HEK293 (cell line): ENCODE measurements at regions of chr2 and their contacts with region 1.

Region 1: DNA sequence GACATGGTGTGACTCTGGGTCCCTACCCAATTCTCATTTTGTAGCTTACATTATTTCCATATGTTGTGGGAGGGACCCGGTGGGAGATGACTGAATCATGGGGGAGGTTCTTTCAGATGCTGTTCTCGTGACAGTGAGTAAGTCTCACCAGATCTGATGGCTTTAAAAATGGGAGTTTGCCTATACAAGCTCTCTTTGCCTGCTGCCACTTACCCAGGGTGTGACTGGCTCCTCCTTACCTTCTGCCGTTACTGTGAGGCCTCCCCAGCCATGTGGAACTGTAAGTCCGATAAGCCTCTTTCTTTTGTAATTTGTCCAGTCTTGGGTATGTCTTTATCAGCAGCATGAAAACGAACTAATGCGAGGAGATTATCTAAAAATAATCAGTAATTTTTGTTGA is 1683.2 kb upstream of the SLC39A10 start:
- H3K4me3 ChIP-seq: no peak overlapping the region
- H3K27ac ChIP-seq: no peak overlapping the region
- H3K4me1 ChIP-seq: no peaks in the 10 kb centered on the region
- CTCF ChIP-seq: no peak

Region 2: DNA sequence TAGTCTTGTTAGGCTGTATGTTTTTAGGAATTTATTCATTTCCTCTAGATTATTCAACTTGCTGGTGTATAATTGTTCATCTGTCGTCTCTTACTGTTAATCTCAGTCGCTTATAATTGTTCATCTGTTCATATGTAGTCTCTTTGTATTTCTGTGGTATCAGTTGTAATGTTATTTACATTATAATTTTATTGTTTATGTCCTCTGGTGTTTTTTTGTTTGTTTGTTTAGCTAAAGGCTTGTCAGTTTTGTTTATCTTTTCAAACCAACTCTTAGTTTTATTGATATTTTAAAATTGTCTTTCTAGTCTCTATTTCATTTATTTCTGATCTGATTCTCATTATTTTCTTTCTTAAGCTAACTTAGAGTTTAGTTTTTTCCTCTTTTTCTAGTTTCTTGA is 333.0 kb before region 1 on chr2:
- CTCF ChIA-PET with region 1: no interaction called
- POLR2A ChIA-PET with region 1: no interaction called
- H3K4me3 ChIP-seq: no peak overlapping the region
- H3K27ac ChIP-seq: no peak overlapping the region
- H3K4me1 ChIP-seq: no peaks in the 10 kb centered on the region
- CTCF ChIP-seq: no peak

Region 3: GRCh38 chr2:193963472-193964119 is 10.2 kb before region 1 on chr2:
- CTCF ChIA-PET with region 1: interaction called, 10 read pairs
- POLR2A ChIA-PET with region 1: no interaction called
- H3K4me3 ChIP-seq: no peak overlapping the region
- H3K27ac ChIP-seq: no peak overlapping the region
- H3K4me1 ChIP-seq: no peaks in the 10 kb centered on the region
- CTCF ChIP-seq: no peak